Naive thymus-derived CD4-positive, alpha-beta T cell (primary cell): ENCODE measurements at regions of chr13 and their contacts with region 1.

Region 1: DNA sequence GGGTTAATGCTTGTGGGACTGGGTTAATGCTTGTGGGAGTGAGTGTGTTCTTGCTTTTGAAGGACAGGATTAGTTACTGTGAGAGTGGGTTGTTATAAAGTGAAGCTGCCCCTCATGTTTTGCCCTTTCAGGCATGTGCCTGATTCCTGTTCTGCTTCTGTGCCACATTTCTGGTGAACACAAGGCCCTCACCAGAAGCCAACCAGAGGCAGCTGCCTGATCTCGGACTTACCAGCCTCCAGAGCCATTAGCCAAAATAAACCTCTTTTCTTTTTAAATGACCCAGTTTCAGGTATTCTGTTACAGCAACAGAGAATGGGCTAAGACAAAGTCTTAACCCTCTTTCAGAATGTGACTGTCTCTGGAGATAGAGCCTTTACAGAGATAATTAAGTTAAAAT is 113.3 kb upstream of the TMTC4 start:
- DNase-seq: no peak
- ATAC-seq: no peak
- H3K4me3 ChIP-seq: no peak overlapping the region
- H3K4me3 Mint-ChIP-seq: no peak overlapping the region
- H3K27ac ChIP-seq: no peak overlapping the region
- H3K27ac Mint-ChIP-seq: no peak overlapping the region
- H3K4me1 ChIP-seq: no peaks in the 10 kb centered on the region
- H3K4me1 Mint-ChIP-seq: no peaks in the 10 kb centered on the region
- H3K27me3 ChIP-seq: no peaks in the 10 kb centered on the region
- H3K27me3 Mint-ChIP-seq: peaks cover 16 to 45% (median 40%) of the 10 kb centered on the region in 5 donors

Region 2: GRCh38 chr13:100773426-100773825 is 14.5 kb before region 1 on chr13:
- CTCF ChIA-PET with region 1: no interaction called
- POLR2A ChIA-PET with region 1: no interaction called
- intact Hi-C with region 1: loop called in 1 of 2 experiments (anchors 1 kb)
- DNase-seq: no peak
- ATAC-seq: no peak
- H3K4me3 ChIP-seq: no peak overlapping the region
- H3K4me3 Mint-ChIP-seq: no peak overlapping the region
- H3K27ac ChIP-seq: no peak overlapping the region
- H3K27ac Mint-ChIP-seq: no peak overlapping the region
- H3K4me1 ChIP-seq: no peaks in the 10 kb centered on the region
- H3K4me1 Mint-ChIP-seq: peaks cover 0 to 15% (median 6%) of the 10 kb centered on the region in 7 donors
- H3K27me3 ChIP-seq: no peaks in the 10 kb centered on the region
- H3K27me3 Mint-ChIP-seq: peaks cover 0 to 4% (median 2%) of the 10 kb centered on the region in 5 donors